Heart right ventricle (tissue), 16 donors: ENCODE measurements at regions of chr21 and their contacts with region 1.

Region 1: DNA sequence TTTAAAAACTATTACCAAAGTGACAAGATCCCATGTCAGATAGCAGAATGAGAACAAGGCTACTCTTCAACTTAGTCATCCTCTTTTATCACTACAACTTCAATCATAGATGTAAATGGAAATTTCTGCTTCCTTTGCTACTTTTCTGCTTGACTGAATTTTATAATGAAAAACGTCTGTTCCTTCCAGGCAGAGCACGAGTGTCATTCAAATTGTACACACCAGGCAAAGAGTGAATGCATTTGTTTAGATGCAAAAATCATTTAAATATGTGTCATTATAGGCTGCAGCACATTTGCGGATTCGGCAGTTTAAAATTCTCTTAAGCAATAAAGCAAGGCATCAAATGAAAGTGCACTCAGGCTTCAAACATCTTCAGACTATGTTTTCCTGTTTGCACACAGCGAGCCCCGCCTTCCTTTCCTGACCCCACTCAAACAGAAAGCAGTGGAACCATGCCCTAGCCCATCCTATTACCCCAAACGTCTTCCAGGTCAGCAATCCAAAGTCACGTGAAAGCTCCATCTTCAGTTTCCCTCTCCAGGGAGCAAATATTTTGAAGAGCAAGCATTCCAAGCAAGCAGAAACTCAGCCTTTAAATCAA is 99.6 kb downstream of the APP start:
- DNase-seq: peak in 1 of 2 donors; percentile 38
- ATAC-seq: peak in 7 of 8 donors; percentile 45 to 78 (median 64)
- H3K4me3 ChIP-seq: peak overlapping the region in 4 of 10 donors; percentile 5 to 25 (median 12)
- H3K27ac ChIP-seq: peak overlapping the region in 3 of 10 donors; percentile 7 to 37 (median 34)
- H3K4me1 ChIP-seq: peaks cover 0 to 55% (median 27%) of the 10 kb centered on the region in 9 donors
- H3K27me3 ChIP-seq: no peaks in the 10 kb centered on the region
- CTCF ChIP-seq: no peak

Region 2: DNA sequence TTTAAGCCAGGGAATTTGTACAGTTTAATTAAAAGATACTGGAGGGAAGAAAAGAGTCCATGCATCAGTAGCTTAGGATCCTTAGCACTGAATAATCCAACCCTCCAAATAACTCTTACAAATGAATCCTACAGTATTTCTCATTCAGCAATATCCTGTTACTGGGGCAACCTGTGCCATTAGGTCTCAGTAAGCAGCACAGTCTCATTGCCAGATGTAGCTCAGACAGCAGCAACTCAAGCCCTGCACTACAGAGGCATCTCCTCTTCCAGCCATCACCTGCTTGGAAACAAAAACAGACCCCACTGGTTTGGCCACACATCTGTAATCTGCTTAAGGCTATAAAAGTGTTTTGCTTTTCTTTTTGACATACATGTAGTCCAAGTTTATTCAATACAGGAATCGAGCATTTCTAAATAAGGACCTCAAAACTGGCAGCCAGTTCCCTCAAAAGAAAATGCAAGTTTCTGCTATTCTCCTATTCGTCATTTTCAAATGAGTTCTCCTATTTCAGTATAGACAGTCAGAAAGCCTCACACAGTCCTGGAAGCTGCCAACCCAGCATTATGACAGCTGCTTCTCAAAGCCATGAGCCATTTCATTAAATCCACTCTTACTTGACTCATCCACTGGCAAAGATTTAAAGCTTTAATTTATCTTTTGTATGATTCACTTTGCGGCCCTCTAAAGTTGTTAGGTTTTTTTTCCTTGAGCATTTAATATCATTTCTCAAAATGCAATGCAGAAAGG is 29.3 kb before region 1 on chr21:
- intact Hi-C with region 1: loop called in 1 of 10 experiments (anchors 1 kb)
- DNase-seq: no peak
- ATAC-seq: peak in 1 of 8 donors; percentile 47
- H3K4me3 ChIP-seq: no peak overlapping the region
- H3K27ac ChIP-seq: no peak overlapping the region
- H3K4me1 ChIP-seq: peaks cover 0 to 11% (median 0%) of the 10 kb centered on the region in 9 donors
- H3K27me3 ChIP-seq: no peaks in the 10 kb centered on the region
- CTCF ChIP-seq: no peak